Tibial artery (tissue), 4 donors: ENCODE measurements at regions of chr5 and their contacts with region 1.

Region 1: DNA sequence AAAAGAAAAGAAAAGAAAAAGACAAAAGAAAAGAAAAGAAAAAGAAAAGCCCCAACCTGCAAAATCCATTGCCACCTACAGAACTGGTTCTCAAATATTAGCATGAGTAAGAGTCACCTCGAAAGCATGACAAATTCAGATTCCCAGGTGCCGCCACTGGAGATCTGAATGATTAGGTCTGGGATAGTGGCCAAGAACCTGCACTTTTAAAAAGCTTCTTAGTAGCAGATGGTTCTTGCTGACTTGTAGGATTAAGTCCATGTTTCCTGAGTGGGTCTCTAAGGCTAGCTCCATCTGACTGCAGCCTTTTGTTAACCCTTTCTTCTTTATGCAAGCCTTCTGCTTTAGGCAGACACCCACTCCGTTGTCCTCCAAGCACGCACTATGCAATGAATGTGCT is 178.5 kb upstream of the CDH18 start:
- DNase-seq: no peak
- H3K4me3 ChIP-seq: no peak overlapping the region
- H3K27ac ChIP-seq: no peak overlapping the region
- H3K4me1 ChIP-seq: no peaks in the 10 kb centered on the region
- H3K27me3 ChIP-seq: no peaks in the 10 kb centered on the region
- CTCF ChIP-seq: no peak

Region 2: GRCh38 chr5:20023686-20024326 is 142.7 kb before region 1 on chr5:
- intact Hi-C with region 1: loop called (anchors 5 kb)
- DNase-seq: no peak
- H3K4me3 ChIP-seq: no peak overlapping the region
- H3K27ac ChIP-seq: no peak overlapping the region
- H3K4me1 ChIP-seq: no peaks in the 10 kb centered on the region
- H3K27me3 ChIP-seq: no peaks in the 10 kb centered on the region
- CTCF ChIP-seq: no peak